ENCODE measurements at regions of chr1 and their contacts with region 1.

Region 1: DNA sequence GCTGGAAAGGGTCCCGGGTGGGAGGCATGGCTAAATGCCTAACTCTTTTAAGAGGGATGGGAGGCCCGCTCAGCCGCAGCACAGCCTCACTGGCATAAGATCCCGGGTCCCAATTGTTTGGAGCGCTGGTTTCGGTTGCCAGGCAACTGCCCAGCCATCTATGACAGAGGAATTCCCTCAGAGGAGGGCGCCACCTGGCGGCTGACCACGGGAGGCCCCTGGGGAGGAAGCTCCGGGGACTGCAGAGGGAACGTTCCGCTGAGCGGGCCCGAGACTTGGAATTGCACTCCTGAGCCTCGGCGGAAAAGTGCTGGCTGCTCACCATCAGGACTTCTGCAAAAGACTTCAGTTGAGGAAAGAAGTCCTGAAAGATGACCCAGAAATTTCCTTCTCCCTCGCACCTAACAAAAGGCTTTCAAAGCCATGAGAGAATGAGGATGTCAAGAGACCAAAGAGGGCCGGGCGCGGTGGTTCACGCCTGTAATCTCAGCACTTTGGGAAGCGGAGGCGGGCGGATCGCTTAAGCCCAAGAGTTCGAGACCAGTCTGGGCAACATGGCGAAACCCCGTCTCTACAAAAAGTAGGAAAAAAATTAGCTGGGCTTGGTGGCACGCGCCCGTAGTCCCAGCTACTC is 1.1 kb upstream of the ELAPOR1 start:
- DNase-seq: peak; percentile 75 to 93 (median 85)
- ATAC-seq: peak; percentile 75
- H3K4me3 ChIP-seq: peak overlapping the region; percentile 68
- H3K4me3 Mint-ChIP-seq: peak overlapping the region; percentile 78 to 93 (median 88)
- H3K27ac ChIP-seq: peak overlapping the region; percentile 68
- H3K27ac Mint-ChIP-seq: peak overlapping the region; percentile 84 to 96 (median 92)
- H3K4me1 ChIP-seq: peaks cover 16 to 21% of the 10 kb centered on the region in 2 donors
- H3K4me1 Mint-ChIP-seq: peaks cover 23 to 40% (median 28%) of the 10 kb centered on the region in 7 donors
- H3K27me3 ChIP-seq: no peaks in the 10 kb centered on the region
- H3K27me3 Mint-ChIP-seq: peaks cover 0 to 41% (median 0%) of the 10 kb centered on the region in 5 donors

Region 2: GRCh38 chr1:108512239-108512981 is 600.4 kb before region 1 on chr1:
- CTCF ChIA-PET with region 1: no interaction called
- POLR2A ChIA-PET with region 1: no interaction called
- intact Hi-C with region 1: loop called in 1 of 2 experiments (anchors 2 kb)
- DNase-seq: peak in 6 of 9 donors; percentile 27 to 58 (median 50)
- ATAC-seq: peak; percentile 85
- H3K4me3 ChIP-seq: no peak overlapping the region
- H3K4me3 Mint-ChIP-seq: no peak overlapping the region
- H3K27ac ChIP-seq: no peak overlapping the region
- H3K27ac Mint-ChIP-seq: no peak overlapping the region
- H3K4me1 ChIP-seq: no peaks in the 10 kb centered on the region
- H3K4me1 Mint-ChIP-seq: no peaks in the 10 kb centered on the region
- H3K27me3 ChIP-seq: no peaks in the 10 kb centered on the region
- H3K27me3 Mint-ChIP-seq: peaks cover 4 to 64% (median 12%) of the 10 kb centered on the region in 5 donors

Region 3: DNA sequence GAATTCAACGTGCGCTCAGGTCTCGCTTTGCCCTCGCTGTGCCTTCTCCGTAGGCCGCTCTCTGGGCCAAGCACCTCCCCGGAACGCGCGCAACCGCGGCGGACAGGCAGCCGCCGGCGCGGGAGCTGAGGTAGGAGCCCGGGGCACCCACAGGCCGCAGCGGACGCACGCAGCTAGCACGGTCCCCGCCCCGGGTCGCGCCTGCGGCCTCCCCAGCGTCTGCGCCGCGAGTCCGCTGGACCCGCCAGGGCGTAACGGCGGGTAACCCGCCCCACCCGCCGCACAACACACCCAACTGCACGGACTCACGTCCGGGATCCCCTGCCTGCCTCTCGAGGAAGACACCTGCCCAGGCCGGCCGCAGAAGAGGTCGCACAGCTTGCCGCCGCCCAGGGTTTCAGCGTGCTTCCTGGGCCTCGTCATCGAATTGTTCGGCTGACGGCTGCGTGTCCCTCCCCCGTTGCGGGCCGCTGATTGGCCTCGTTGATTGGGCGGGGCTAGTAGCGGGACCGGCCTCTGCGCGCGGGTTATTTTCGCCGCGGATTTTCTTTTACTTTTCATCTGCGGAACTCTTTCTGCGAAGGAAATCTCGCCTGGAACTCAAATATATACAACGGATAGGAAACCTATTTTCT is 149.6 kb before region 1 on chr1 and contains the start of gene CLCC1:
- CTCF ChIA-PET with region 1: interaction called, 3 read pairs
- POLR2A ChIA-PET with region 1: no interaction called
- intact Hi-C with region 1: loop called (anchors 1 to 2 kb)
- DNase-seq: peak; percentile 78 to 92 (median 89)
- ATAC-seq: peak; percentile 97
- H3K4me3 ChIP-seq: peak within 1 kb of the TSS; percentile 76
- H3K4me3 Mint-ChIP-seq: peak within 1 kb of the TSS; percentile 87 to 94 (median 90)
- H3K27ac ChIP-seq: peak within 1 kb of the TSS; percentile 85
- H3K27ac Mint-ChIP-seq: peak within 1 kb of the TSS; percentile 78 to 97 (median 92)
- H3K4me1 ChIP-seq: peaks cover 11 to 16% of the 10 kb centered on the region in 2 donors
- H3K4me1 Mint-ChIP-seq: peaks cover 21 to 48% (median 37%) of the 10 kb centered on the region in 7 donors
- H3K27me3 ChIP-seq: no peaks in the 10 kb centered on the region
- H3K27me3 Mint-ChIP-seq: peaks cover 0 to 15% (median 0%) of the 10 kb centered on the region in 5 donors
- total RNA-seq, gene CLCC1: 15.4 to 34.6 (median 25.2) TPM

Region 4: DNA sequence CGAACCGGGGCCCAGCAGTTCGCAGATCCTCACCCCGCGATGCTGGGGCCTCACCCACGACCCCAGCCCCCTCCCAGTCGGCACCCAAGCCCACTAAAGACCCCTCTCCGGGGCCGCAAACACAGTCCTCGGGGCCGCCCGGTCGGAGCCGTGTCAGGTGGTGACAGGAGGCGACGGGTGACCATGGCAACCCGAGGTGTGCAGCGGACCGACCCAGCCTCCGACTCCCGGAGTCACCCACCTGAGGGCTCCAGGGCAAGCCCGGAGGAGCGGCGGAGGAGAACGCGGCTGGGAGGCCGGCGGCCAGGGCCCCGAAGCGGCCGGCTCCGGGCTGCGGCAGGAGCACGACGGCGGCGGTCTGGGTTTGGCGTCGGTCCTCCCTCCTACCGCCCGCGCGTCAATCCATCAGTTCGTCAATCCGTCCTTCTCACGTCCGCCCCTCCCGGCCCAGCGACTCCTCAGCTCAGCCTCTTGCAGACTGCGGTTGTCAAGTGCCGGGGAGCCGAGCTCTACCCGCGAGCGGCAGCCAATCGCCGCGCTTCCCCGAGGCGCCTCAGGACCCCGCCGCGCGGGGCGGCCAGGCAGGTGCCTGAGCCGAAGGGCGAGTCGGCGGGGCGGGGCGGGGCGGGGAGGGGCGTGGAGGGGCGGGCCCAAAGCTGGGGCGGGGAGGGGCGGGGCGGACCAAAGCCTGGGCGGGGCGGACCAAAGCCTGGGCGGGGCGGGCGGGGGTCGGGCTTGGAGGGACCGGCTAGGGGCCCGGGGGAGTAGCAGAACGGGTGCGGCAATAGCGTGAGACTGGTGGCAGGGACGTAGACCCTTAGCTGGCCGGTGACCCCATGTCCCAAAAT is 70.9 kb before region 1 on chr1 and contains the start of gene WDR47:
- CTCF ChIA-PET with region 1: no interaction called
- POLR2A ChIA-PET with region 1: interaction called, 6 read pairs
- intact Hi-C with region 1: loop called (anchors 1 kb)
- DNase-seq: peak; percentile 95 to 97 (median 96)
- ATAC-seq: peak; percentile 99
- H3K4me3 ChIP-seq: peak within 1 kb of the TSS; percentile 97
- H3K4me3 Mint-ChIP-seq: peak within 1 kb of the TSS; percentile 86 to 97 (median 94)
- H3K27ac ChIP-seq: peak within 1 kb of the TSS; percentile 90
- H3K27ac Mint-ChIP-seq: peak within 1 kb of the TSS; percentile 78 to 97 (median 91)
- H3K4me1 ChIP-seq: peaks cover 0 to 7% of the 10 kb centered on the region in 2 donors
- H3K4me1 Mint-ChIP-seq: peaks cover 7 to 25% (median 16%) of the 10 kb centered on the region in 7 donors
- H3K27me3 ChIP-seq: no peaks in the 10 kb centered on the region
- H3K27me3 Mint-ChIP-seq: peaks cover 0 to 7% (median 0%) of the 10 kb centered on the region in 5 donors
- total RNA-seq, gene WDR47: 9.8 to 15.4 (median 14.4) TPM

Region 5: GRCh38 chr1:109090196-109091077 is 22.3 kb before region 1 on chr1 and contains the start of gene TMEM167B:
- CTCF ChIA-PET with region 1: no interaction called
- POLR2A ChIA-PET with region 1: interaction called, 4 read pairs
- intact Hi-C with region 1: loop called in 1 of 2 experiments (anchors 1 kb)
- DNase-seq: peak; percentile 71 to 92 (median 87)
- ATAC-seq: peak; percentile 98
- H3K4me3 ChIP-seq: peak within 1 kb of the TSS; percentile 84
- H3K4me3 Mint-ChIP-seq: peak within 1 kb of the TSS; percentile 88 to 98 (median 96)
- H3K27ac ChIP-seq: peak within 1 kb of the TSS; percentile 97
- H3K27ac Mint-ChIP-seq: peak within 1 kb of the TSS; percentile 90 to 99 (median 98)
- H3K4me1 ChIP-seq: peaks cover 14 to 18% of the 10 kb centered on the region in 2 donors
- H3K4me1 Mint-ChIP-seq: peaks cover 15 to 43% (median 36%) of the 10 kb centered on the region in 7 donors
- H3K27me3 ChIP-seq: no peaks in the 10 kb centered on the region
- H3K27me3 Mint-ChIP-seq: no peaks in the 10 kb centered on the region
- total RNA-seq, gene TMEM167B: 33.2 to 65.6 (median 41.2) TPM

Region 6: GRCh38 chr1:109161858-109162606 is 49.3 kb after region 1 on chr1:
- CTCF ChIA-PET with region 1: interaction called, 3 read pairs
- POLR2A ChIA-PET with region 1: no interaction called
- intact Hi-C with region 1: loop called in 1 of 2 experiments (anchors 5 kb)
- DNase-seq: peak in 5 of 9 donors; percentile 5 to 45 (median 12)
- ATAC-seq: peak; percentile 88
- H3K4me3 ChIP-seq: no peak overlapping the region
- H3K4me3 Mint-ChIP-seq: peak overlapping the region in 6 of 10 donors; percentile 31 to 72 (median 52)
- H3K27ac ChIP-seq: no peak overlapping the region
- H3K27ac Mint-ChIP-seq: peak overlapping the region in 8 of 9 donors; percentile 58 to 87 (median 75)
- H3K4me1 ChIP-seq: peaks cover 0 to 14% of the 10 kb centered on the region in 2 donors
- H3K4me1 Mint-ChIP-seq: peaks cover 9 to 24% (median 18%) of the 10 kb centered on the region in 7 donors
- H3K27me3 ChIP-seq: no peaks in the 10 kb centered on the region
- H3K27me3 Mint-ChIP-seq: no peaks in the 10 kb centered on the region

Region 7: DNA sequence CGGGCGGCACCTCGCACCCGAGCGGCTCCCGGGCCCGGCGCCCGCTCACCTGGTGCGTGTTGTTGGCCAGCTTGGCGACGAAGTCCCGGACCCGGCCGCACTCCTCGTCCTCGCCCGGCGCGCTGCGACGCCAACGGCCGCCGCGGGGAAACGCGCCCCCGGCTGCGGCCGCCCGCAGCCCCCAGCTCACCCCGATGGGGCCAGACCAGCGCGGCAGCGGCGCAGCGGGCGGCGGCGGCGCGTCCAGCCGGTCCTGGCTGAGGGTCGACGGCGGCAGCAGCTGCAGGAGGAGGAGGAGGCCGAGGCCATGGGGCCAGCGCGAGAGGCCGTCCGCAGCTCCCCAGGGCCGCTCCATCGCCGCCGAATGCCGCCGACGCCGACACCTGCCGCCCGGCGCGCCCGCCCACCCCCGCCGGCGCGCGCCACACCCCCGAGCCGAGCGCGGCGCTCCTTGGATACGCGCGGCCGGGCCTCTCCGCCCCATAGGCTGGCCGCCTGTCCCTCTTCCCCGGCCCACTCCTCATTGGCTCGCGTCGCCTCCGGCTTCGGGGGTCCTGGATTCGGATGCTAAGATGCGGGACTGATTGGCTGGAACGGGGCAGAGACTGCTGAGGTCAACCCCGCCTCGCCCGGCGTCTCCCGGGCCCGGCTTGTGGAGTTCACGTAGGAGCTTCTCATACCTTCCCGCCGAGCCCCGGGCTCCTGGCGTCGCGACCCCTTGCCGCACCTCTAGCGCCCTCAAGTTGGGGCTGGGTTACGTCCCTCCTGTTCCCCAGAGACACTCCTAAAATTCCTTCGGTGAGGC is 285.0 kb after region 1 on chr1 and contains the start of gene SORT1:
- CTCF ChIA-PET with region 1: interaction called, 3 read pairs
- POLR2A ChIA-PET with region 1: no interaction called
- intact Hi-C with region 1: loop called in 1 of 2 experiments (anchors 5 kb)
- DNase-seq: peak; percentile 29 to 67 (median 43)
- ATAC-seq: peak; percentile 94
- H3K4me3 ChIP-seq: peak within 1 kb of the TSS; percentile 37
- H3K4me3 Mint-ChIP-seq: peak within 1 kb of the TSS; percentile 80 to 90 (median 86)
- H3K27ac ChIP-seq: no peak within 1 kb of the TSS
- H3K27ac Mint-ChIP-seq: peak within 1 kb of the TSS in 2 of 9 donors; percentile 43 to 74
- H3K4me1 ChIP-seq: peaks cover 0 to 6% of the 10 kb centered on the region in 2 donors
- H3K4me1 Mint-ChIP-seq: peaks cover 0 to 30% (median 16%) of the 10 kb centered on the region in 7 donors
- H3K27me3 ChIP-seq: peaks cover 0 to 18% of the 10 kb centered on the region in 2 donors
- H3K27me3 Mint-ChIP-seq: peaks cover 36 to 51% (median 41%) of the 10 kb centered on the region in 5 donors
- total RNA-seq, gene SORT1: 1.0 to 25.6 (median 1.8) TPM

Measured in naive thymus-derived CD4-positive, alpha-beta T cell (primary cell).